ENCODE measurements at regions of chr20 and their contacts with region 1.

Region 1: GRCh38 chr20:31633339-31633914 is 4.3 kb upstream of the COX4I2 start:
- DNase-seq: no peak
- ATAC-seq: no peak
- H3K4me3 Mint-ChIP-seq: no peak overlapping the region
- H3K27ac Mint-ChIP-seq: no peak overlapping the region
- H3K4me1 Mint-ChIP-seq: peaks cover 6% of the 10 kb centered on the region
- H3K27me3 Mint-ChIP-seq: peaks cover 17% of the 10 kb centered on the region

Region 2: GRCh38 chr20:31494131-31494530 is 139.3 kb before region 1 on chr20:
- CTCF ChIA-PET with region 1: no interaction called
- DNase-seq: no peak
- ATAC-seq: no peak
- H3K4me3 Mint-ChIP-seq: no peak overlapping the region
- H3K27ac Mint-ChIP-seq: no peak overlapping the region
- H3K4me1 Mint-ChIP-seq: no peaks in the 10 kb centered on the region
- H3K27me3 Mint-ChIP-seq: peaks cover 25% of the 10 kb centered on the region

Region 3: DNA sequence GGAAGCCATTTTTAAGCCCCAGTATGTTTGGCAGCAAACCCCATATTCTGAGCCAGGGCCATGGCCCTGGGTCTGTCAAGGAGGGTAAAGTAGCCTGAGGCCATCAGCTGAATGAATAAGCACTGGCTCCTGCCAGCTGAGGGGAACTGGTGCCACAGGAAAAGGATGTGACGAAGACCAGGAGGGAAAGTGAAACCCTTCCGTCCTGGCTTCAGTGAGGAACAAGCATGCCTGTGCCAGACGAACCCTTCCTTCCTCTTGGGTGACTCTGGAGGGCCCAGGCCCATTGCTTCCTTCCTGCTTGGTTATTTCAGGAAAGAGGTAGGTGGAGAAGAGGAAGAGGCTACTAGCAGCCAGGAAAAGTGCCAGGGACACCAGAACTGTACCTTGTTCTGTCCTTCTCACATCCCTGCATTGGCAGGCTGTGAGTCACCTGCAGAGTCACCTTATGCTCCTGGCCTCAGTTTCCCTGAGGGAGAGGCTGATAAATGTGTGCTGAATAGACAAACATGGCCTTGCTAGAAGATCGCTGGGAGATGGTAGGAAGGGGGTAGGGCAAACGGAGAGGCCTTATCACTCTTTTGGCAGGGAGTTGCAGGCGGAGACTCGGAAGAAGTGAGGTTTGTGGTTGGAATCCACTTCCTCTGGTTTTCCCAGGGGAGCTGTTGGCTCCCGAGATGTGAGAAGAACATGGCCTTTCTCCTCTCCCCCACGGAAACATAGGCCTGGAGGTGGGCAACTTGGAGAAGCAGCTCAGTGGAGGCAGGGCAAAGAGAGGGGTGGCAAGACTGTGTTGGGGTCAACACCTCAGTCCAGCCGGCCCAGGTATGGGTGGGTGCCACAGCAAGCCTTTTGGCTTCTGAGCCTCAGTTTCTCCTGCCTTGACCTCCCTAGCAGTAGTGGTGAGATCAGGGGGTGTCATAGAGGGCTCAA is 41.7 kb after region 1 on chr20:
- CTCF ChIA-PET with region 1: interaction called, 11 read pairs
- DNase-seq: peak; percentile 90
- ATAC-seq: peak; percentile 70
- H3K4me3 Mint-ChIP-seq: peak overlapping the region; percentile 85
- H3K27ac Mint-ChIP-seq: peak overlapping the region; percentile 97
- H3K4me1 Mint-ChIP-seq: peaks cover 91% of the 10 kb centered on the region
- H3K27me3 Mint-ChIP-seq: no peaks in the 10 kb centered on the region

Region 4: DNA sequence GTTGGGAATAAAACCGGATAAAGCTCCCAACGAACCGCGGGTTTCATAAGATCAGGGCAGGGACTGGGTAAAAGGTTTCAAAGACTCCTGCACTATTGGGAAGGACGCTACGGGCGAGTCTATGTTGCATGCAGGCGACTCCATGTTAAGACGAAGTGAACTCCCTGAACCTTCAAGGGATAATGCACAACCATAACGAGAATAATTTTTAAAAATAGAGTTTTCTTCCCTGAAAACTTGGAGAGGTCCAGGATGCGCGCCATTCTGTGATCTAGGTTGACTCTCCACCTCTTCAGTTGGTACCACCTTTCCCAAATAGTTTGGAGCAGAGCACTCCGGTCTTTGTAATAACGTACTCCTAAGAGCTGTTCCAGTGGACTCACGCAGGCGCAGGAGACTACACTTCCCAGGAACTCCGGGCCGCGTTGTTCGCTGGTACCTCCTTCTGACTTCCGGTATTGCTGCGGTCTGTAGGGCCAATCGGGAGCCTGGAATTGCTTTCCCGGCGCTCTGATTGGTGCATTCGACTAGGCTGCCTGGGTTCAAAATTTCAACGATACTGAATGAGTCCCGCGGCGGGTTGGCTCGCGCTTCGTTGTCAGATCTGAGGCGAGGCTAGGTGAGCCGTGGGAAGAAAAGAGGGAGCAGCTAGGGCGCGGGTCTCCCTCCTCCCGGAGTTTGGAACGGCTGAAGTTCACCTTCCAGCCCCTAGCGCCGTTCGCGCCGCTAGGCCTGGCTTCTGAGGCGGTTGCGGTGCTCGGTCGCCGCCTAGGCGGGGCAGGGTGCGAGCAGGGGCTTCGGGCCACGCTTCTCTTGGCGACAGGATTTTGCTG is 105.5 kb after region 1 on chr20 and contains the start of gene TPX2:
- CTCF ChIA-PET with region 1: interaction called, 11 read pairs
- DNase-seq: peak; percentile 91
- ATAC-seq: peak; percentile 93
- H3K4me3 Mint-ChIP-seq: no peak within 1 kb of the TSS
- H3K27ac Mint-ChIP-seq: no peak within 1 kb of the TSS
- H3K4me1 Mint-ChIP-seq: peaks cover 10% of the 10 kb centered on the region
- H3K27me3 Mint-ChIP-seq: peaks cover 5% of the 10 kb centered on the region
- total RNA-seq, gene TPX2: 148 to 159 TPM

Measured in activated CD8-positive, alpha-beta memory T cell treated with anti-CD3 and anti-CD28 coated beads, Interleukin-2, amount 10 ng/mL, durations not matched to agents 7 days and 5 days (primary cell).